ENCODE measurements at regions of chr22 and their contacts with region 1.

Region 1: GRCh38 chr22:20156611-20157429 is 6.0 kb upstream of the CCDC188 start:
- DNase-seq: peak; percentile 74
- H3K4me3 Mint-ChIP-seq: no peak overlapping the region
- H3K27ac Mint-ChIP-seq: no peak overlapping the region
- H3K4me1 Mint-ChIP-seq: no peaks in the 10 kb centered on the region
- H3K27me3 Mint-ChIP-seq: peaks cover 4% of the 10 kb centered on the region

Region 2: DNA sequence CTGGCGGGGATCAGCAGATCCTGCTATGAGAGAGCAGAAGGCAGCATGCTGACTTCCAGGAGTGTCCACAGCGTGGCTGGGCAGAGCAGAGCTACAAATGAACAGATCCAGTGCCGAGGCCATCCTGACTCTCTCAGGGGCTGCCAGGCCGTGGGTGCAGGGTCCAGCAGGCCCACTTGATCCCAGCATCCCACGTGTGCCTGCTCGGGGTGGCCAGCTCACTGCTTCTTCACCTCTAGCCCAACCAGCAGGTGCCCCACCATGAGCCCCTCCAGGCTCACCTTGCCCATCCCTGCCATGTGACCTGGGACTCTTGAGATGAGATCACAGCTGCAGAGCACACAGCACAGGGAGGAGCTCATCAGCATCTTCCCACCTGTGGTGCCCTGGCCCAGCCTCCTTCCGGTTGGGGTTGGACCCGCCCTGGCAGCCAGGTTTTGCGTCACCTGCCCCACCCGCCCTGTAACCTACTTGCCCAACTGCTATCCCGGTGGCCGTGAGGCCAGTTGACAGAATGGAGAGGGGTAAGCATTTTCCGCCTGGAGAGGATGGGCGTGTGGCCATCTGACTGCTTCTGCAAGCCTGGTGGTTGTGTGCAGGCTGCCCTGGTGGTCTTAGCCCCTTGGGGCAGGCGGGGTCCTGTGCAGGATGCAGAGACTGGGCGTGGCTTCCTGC is 125.0 kb before region 1 on chr22:
- intact Hi-C with region 1: no loop called
- DNase-seq: no peak
- H3K4me3 Mint-ChIP-seq: no peak overlapping the region
- H3K27ac Mint-ChIP-seq: no peak overlapping the region
- H3K4me1 Mint-ChIP-seq: peaks cover 3% of the 10 kb centered on the region
- H3K27me3 Mint-ChIP-seq: no peaks in the 10 kb centered on the region

Region 3: GRCh38 chr22:20268279-20269012 is 111.6 kb after region 1 on chr22 and contains the start of gene RTN4R:
- intact Hi-C with region 1: loop called (anchors 1 kb)
- DNase-seq: peak; percentile 45
- H3K4me3 Mint-ChIP-seq: peak within 1 kb of the TSS; percentile 82
- H3K27ac Mint-ChIP-seq: no peak within 1 kb of the TSS
- H3K4me1 Mint-ChIP-seq: no peaks in the 10 kb centered on the region
- H3K27me3 Mint-ChIP-seq: peaks cover 6% of the 10 kb centered on the region
- total RNA-seq, gene RTN4R: 1.7 and 1.9 TPM in 2 replicates

Region 4: DNA sequence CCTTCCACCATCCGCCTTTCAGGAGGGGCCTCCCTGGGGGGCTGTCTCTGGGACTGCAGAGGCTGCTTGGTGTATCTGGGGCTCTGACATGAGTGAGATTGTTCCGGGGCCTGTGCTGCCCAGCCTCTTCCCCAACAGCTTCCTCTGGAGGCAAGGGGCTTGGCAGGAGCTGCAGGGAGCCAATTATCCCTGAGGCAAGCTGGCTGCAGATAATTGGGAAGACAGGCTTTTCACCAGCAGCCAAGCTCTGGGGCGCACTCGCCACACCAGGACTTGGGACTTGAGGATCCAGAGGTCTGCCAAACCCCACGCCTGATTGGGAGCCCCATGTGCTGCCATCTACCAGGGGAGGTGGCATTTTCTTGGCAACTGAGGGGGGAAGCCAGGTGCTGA is 126.8 kb after region 1 on chr22:
- intact Hi-C with region 1: loop called (anchors 1 kb)
- DNase-seq: no peak
- H3K4me3 Mint-ChIP-seq: no peak overlapping the region
- H3K27ac Mint-ChIP-seq: no peak overlapping the region
- H3K4me1 Mint-ChIP-seq: no peaks in the 10 kb centered on the region
- H3K27me3 Mint-ChIP-seq: no peaks in the 10 kb centered on the region